ENCODE measurements at regions of chr6 and their contacts with region 1.

Region 1: DNA sequence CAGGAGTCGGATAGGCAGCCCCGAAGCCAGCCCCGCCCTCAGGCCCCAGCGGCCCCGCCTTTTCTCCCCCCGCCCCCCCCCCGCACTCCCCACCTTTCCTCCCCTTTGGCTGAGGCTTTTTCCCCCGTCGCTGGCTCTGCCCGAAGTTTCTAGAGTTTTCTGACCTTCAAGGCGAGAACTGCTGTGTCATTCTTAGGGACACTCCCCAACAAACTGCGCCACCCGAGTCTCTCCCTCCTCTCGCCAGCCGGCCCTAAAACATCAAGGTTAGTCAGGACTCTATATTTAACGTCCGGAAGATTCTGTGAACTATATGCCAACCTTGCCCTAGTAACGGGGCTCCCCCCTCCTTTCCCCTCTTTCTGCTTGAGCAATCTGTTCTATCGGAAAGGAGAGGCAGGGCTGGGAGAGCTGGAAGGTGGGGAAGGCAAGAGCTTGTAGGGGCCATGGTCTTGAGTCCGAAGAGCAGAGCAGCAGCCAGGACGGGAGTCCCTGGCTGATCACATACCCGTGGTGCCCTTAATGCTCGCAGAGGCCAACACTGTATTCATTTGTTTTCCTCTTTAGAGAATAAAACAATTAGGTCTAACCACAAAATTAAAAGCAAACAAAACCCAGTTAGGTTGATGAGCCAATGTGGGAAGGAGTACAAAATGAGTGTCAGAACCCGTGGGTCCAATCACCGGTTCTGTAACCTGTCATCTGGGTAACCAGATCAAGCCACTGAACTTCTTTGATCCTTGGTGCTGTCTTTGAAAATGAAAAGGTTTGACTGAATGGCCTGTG is 5.3 kb upstream of the HSPA1B start:
- DNase-seq: peak; percentile 65
- ATAC-seq: peak; percentile 23
- H3K4me3 Mint-ChIP-seq: peak overlapping the region; percentile 99
- H3K27ac Mint-ChIP-seq: peak overlapping the region; percentile 96
- H3K4me1 Mint-ChIP-seq: peaks cover 41% of the 10 kb centered on the region
- H3K27me3 Mint-ChIP-seq: no peaks in the 10 kb centered on the region

Region 2: GRCh38 chr6:31614075-31614619 is 208.1 kb before region 1 on chr6:
- POLR2A ChIA-PET with region 1: no interaction called
- DNase-seq: no peak
- ATAC-seq: no peak
- H3K4me3 Mint-ChIP-seq: no peak overlapping the region
- H3K27ac Mint-ChIP-seq: no peak overlapping the region
- H3K4me1 Mint-ChIP-seq: peaks cover 31% of the 10 kb centered on the region
- H3K27me3 Mint-ChIP-seq: no peaks in the 10 kb centered on the region

Region 3: GRCh38 chr6:31729515-31729978 is 92.7 kb before region 1 on chr6:
- POLR2A ChIA-PET with region 1: interaction called, 29 read pairs
- DNase-seq: peak; percentile 84
- ATAC-seq: peak; percentile 57
- H3K4me3 Mint-ChIP-seq: peak overlapping the region; percentile 98
- H3K27ac Mint-ChIP-seq: peak overlapping the region; percentile 88
- H3K4me1 Mint-ChIP-seq: peaks cover 59% of the 10 kb centered on the region
- H3K27me3 Mint-ChIP-seq: no peaks in the 10 kb centered on the region

Measured in activated naive CD8-positive, alpha-beta T cell treated with anti-CD3 and anti-CD28 coated beads, Interleukin-2, amount 10 ng/mL, durations not matched to agents 7 days and 5 days (primary cell).